Activated T-helper 2 cell treated with anti-CD3 and anti-CD28 coated beads, Interferon-gamma antibody, Interleukin-2, Interleukin-4, amounts not matched to agents 10 μg/mL and 5 μg/mL and 100 μg/mL, durations not matched to agents 14 hours and 24 hours and 36 hours (primary cell): ENCODE measurements at regions of chr16 and their contacts with region 1.

Region 1: GRCh38 chr16:79217375-79218011 is 383.0 kb downstream of the MAF start:
- DNase-seq: peak; percentile 34
- H3K4me3 Mint-ChIP-seq: no peak overlapping the region
- H3K27ac Mint-ChIP-seq: peak overlapping the region; percentile 13
- H3K4me1 Mint-ChIP-seq: peaks cover 32% of the 10 kb centered on the region
- H3K27me3 Mint-ChIP-seq: no peaks in the 10 kb centered on the region

Region 2: GRCh38 chr16:79089735-79090284 is 127.7 kb before region 1 on chr16:
- intact Hi-C with region 1: loop called (anchors 5 kb)
- DNase-seq: peak; percentile 69
- H3K4me3 Mint-ChIP-seq: peak overlapping the region; percentile 51
- H3K27ac Mint-ChIP-seq: peak overlapping the region; percentile 89
- H3K4me1 Mint-ChIP-seq: peaks cover 53% of the 10 kb centered on the region
- H3K27me3 Mint-ChIP-seq: no peaks in the 10 kb centered on the region

Region 3: DNA sequence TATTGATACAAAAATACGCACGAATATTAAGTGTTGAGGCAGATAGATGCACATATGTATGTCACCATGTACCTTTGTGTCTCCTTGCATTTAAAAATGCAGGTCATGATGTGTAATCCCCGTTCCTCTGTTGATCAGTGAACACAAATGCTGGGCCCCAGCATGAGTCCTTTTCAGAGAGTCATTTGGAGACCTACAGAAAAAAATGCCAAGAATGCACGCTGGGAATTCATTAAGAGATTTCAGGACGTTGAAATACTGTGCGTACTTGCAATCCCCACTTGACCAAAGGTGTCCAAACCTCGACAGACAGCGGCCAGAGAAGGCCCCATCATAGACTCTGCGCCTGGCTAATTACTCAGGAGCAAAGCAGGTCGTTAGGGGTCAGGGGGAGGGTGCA is 112.9 kb before region 1 on chr16:
- intact Hi-C with region 1: no loop called
- DNase-seq: no peak
- H3K4me3 Mint-ChIP-seq: no peak overlapping the region
- H3K27ac Mint-ChIP-seq: no peak overlapping the region
- H3K4me1 Mint-ChIP-seq: peaks cover 2% of the 10 kb centered on the region
- H3K27me3 Mint-ChIP-seq: peaks cover 11% of the 10 kb centered on the region

Region 4: GRCh38 chr16:79169239-79169638 is 48.3 kb before region 1 on chr16:
- intact Hi-C with region 1: loop called (anchors 5 kb)
- DNase-seq: peak; percentile 22
- H3K4me3 Mint-ChIP-seq: no peak overlapping the region
- H3K27ac Mint-ChIP-seq: no peak overlapping the region
- H3K4me1 Mint-ChIP-seq: peaks cover 11% of the 10 kb centered on the region
- H3K27me3 Mint-ChIP-seq: no peaks in the 10 kb centered on the region

Region 5: DNA sequence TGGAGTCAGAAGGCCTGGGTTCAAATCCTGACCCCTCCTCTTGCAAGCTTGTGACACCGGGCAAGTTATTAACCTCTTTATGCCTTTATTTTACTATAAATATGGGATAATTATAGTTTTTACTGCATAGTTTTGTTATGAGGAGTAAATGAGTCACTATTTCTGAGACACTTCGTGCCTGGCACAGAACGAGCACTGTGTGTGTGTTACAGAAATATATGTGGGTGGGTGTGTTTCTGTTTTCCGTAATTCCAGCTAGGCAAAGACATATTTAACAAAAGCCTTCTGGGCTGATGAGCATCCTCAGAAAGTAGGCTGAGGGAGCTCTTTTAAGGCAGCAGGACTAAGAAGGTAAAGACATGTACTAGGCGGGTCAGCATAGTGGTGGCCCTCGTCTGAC is 34.9 kb before region 1 on chr16:
- intact Hi-C with region 1: loop called (anchors 5 kb)
- DNase-seq: no peak
- H3K4me3 Mint-ChIP-seq: no peak overlapping the region
- H3K27ac Mint-ChIP-seq: no peak overlapping the region
- H3K4me1 Mint-ChIP-seq: peaks cover 15% of the 10 kb centered on the region
- H3K27me3 Mint-ChIP-seq: peaks cover 6% of the 10 kb centered on the region